ENCODE measurements at regions of chr5 and their contacts with region 1.

Region 1: DNA sequence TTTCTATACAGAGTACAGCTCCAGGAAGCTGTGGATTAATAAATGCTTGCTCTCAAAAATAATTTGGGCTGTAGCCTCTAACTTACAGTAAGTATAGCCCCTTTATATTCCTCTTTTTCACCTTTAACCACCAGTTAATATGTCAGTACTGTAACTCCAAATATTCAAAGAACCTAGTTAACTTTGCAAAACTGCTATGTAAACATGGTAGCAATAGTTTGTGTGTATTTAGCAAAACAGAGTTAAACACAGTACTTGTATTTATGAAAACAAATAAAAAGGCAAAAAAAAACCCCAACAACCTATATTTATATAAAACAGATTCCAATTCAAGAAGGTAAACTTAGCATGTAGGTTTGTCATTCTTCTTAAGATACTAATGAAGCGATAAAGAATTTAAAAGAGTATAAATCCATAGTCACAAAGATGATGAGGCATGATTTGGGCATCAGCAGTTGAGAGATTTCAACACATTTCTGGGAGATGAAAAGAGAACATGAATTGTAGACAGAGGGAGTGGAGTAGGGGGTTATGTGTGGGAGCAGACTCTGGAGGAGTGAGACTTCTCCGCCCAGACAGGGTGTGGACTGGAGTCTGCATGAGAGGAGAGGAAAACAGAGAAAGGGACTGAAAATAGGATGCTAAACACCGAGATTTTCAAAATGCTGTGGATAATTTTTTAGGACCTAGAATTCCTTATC is 47.0 kb upstream of the F2RL1 start:
- DNase-seq: no peak
- H3K4me3 ChIP-seq: no peak overlapping the region
- H3K27ac ChIP-seq: no peak overlapping the region
- H3K4me1 ChIP-seq: peaks cover 0 to 2% (median 0%) of the 10 kb centered on the region in 4 experiments; a peak in 1 of 7 replicates
- H3K27me3 ChIP-seq: no peaks in the 10 kb centered on the region
- CTCF ChIP-seq: no peak
- EP300 ChIP-seq: no peak
- POLR2A ChIP-seq: no peak
- RAD21 ChIP-seq: no peak

Region 2: GRCh38 chr5:76601470-76601869 is 170.4 kb before region 1 on chr5:
- CTCF ChIA-PET with region 1: interaction called, 29 read pairs
- POLR2A ChIA-PET with region 1: no interaction called
- DNase-seq: no peak
- H3K4me3 ChIP-seq: no peak overlapping the region
- H3K27ac ChIP-seq: no peak overlapping the region
- H3K4me1 ChIP-seq: no peaks in the 10 kb centered on the region
- H3K27me3 ChIP-seq: no peaks in the 10 kb centered on the region
- CTCF ChIP-seq: peak in 2 of 3 experiments; percentile 63 to 79; a peak in 3 of 4 replicates
- EP300 ChIP-seq: no peak
- POLR2A ChIP-seq: no peak
- RAD21 ChIP-seq: peak; percentile 78 to 88

Region 3: GRCh38 chr5:76715736-76716455 is 56.0 kb before region 1 on chr5 and contains the start of gene F2R:
- CTCF ChIA-PET with region 1: interaction called, 24 read pairs
- POLR2A ChIA-PET with region 1: interaction called, 3 read pairs
- DNase-seq: peak in 1 of 2 experiments; percentile 80
- H3K4me3 ChIP-seq: peak within 1 kb of the TSS; percentile 60 to 88 (median 85)
- H3K27ac ChIP-seq: peak within 1 kb of the TSS; percentile 56
- H3K4me1 ChIP-seq: peaks cover 0 to 2% (median 0%) of the 10 kb centered on the region in 4 experiments; a peak in 2 of 7 replicates
- H3K27me3 ChIP-seq: peaks cover 5 to 19% (median 14%) of the 10 kb centered on the region in 4 experiments
- CTCF ChIP-seq: peak; percentile 55 to 76 (median 57)
- EP300 ChIP-seq: no peak
- POLR2A ChIP-seq: no peak
- RAD21 ChIP-seq: peak; percentile 43 to 58; a peak in 3 of 4 replicates
- total RNA-seq, gene F2R: 23.8 and 25.0 TPM in 2 replicates

Region 4: GRCh38 chr5:76736679-76737556 is 34.9 kb before region 1 on chr5:
- CTCF ChIA-PET with region 1: interaction called, 13 read pairs
- POLR2A ChIA-PET with region 1: no interaction called
- DNase-seq: no peak
- H3K4me3 ChIP-seq: no peak overlapping the region
- H3K27ac ChIP-seq: no peak overlapping the region
- H3K4me1 ChIP-seq: peaks cover 0 to 3% (median 0%) of the 10 kb centered on the region in 4 experiments; a peak in 1 of 7 replicates
- H3K27me3 ChIP-seq: no peaks in the 10 kb centered on the region
- CTCF ChIP-seq: no peak
- EP300 ChIP-seq: no peak
- POLR2A ChIP-seq: no peak
- RAD21 ChIP-seq: no peak

Region 5: DNA sequence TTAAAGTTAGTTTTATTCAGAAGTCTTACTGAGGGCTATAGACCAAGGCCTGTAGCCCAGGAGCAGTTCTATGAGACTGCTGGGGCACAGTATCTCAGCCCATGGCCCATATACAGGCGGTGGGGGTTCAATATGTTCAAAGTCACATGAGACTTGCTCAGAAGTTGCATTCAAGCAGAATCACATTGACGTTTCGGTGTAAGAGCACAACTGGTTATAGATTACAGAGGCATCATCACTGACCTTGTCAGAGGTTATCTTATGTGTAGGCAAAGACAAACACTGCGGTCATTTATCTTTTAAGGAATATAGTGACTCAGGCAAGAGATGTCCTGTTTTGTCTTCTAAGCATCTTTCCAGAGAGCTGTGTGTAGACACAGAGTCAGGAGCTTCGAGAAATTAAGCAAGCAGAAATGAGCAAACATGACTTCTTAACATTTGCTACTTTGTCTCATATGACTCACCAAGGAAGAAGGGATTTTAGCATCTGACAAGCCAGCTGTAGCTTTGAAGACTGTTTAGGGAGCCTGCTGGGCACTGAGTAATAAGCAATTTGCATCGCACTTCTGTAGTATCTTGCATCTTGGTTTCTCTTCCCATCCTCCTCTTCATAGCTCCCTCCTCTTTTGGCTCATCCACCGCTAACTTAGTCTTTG is 34.1 kb after region 1 on chr5:
- CTCF ChIA-PET with region 1: interaction called, 8 read pairs
- POLR2A ChIA-PET with region 1: interaction called, 10 read pairs
- DNase-seq: no peak
- H3K4me3 ChIP-seq: peak overlapping the region in 3 of 4 experiments; percentile 9 to 34 (median 32); a peak in 3 of 8 replicates
- H3K27ac ChIP-seq: no peak overlapping the region
- H3K4me1 ChIP-seq: peaks cover 8 to 22% (median 17%) of the 10 kb centered on the region in 4 experiments; a peak in 6 of 7 replicates
- H3K27me3 ChIP-seq: no peaks in the 10 kb centered on the region; a peak in 1 of 7 replicates
- CTCF ChIP-seq: no peak
- EP300 ChIP-seq: no peak
- POLR2A ChIP-seq: no peak
- RAD21 ChIP-seq: no peak

Region 6: DNA sequence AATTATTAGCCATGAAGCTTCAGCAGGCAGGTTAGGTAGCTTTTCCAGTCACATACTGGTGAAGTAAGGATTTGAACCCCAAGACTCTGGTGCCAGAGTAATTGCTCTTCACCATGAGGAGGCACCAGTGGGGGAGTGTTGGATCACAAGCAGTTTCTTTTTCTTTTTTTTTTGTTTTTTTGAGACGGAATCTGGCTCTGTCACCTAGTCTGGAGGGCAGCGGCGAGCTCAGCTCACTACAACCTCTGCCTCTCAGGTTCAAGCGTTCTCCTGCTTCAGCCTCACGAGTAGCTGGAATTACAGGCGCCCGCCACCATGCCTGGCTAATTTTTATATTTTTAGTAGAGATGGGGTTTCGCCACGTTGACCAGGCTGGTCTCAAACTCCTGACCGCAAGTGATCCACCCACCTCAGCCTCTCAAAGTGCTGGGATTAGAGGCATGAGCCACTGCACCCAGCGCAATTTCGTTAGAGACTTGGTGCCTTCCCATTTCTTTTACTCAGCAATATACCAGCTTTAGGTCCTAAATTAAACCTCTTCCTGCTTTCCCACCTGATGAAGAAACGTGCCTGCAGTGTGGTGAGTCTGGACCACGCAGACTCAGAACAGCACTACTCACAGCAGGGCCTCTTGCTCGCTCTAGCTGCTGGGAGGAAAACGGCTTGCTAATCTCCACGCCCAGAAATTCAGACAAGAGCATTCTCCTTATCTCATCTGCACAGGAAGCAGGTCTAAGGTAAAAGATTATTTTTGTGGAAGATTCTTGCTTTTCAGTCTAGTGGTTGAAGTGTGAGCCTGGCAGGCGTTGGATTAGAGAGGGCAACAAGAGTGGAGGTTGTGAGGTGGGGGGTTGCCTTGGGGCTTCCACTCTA is 77.8 kb after region 1 on chr5 and contains the start of gene S100Z:
- CTCF ChIA-PET with region 1: no interaction called
- POLR2A ChIA-PET with region 1: no interaction called
- DNase-seq: no peak
- H3K4me3 ChIP-seq: no peak within 1 kb of the TSS
- H3K27ac ChIP-seq: no peak within 1 kb of the TSS
- H3K4me1 ChIP-seq: 0 out of 7 replicates have a peak, but pooled peaks cover 0 to 2% (median 0%) of the 10 kb centered on the region in 4 experiments
- H3K27me3 ChIP-seq: no peaks in the 10 kb centered on the region
- CTCF ChIP-seq: no peak
- EP300 ChIP-seq: no peak
- POLR2A ChIP-seq: no peak
- RAD21 ChIP-seq: no peak
- total RNA-seq, gene S100Z: 0.30 TPM in 1 of 2 replicates, not detected in the other

Measured in H1 (cell line).